ENCODE measurements at regions of chr3 and their contacts with region 1.

Region 1: DNA sequence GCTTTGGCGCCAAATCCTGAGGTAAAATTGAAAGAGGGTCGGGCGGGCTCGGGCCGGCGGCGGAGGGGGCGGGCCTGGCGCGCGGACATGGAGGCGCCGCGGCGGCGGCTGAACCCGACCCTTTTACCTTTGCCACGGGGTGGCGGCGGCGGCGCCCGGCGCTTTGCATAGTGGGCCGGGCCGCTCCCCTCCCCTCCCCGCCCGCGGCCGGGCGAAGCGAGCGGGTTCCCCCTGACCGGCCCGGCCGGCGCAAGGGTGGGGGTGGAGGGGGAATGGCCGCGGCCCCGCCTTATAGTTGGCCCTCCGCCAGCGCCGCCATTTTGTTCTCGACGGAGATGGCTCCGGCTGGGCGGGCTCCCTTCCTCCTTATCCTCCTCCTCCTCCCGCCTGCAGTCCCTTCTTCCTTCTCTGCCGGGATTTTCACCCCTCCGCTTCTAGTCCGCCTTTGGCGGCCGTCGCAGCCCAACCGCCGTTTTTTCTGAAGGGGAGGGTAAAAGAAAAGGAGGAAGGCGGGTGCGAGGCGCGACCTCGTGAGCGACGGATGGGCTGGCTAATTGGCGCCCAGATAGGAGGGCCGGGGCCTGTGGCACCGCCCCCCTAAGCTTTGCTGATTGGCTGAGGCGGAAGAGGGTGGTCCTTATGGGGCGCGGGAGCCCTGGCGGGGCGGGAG is 638 bp downstream of the NR2C2 start:
- DNase-seq: peak; percentile 95
- H3K4me3 Mint-ChIP-seq: peak overlapping the region; percentile 97
- H3K27ac Mint-ChIP-seq: peak overlapping the region; percentile 100
- H3K4me1 Mint-ChIP-seq: peaks cover 36% of the 10 kb centered on the region
- H3K27me3 Mint-ChIP-seq: no peaks in the 10 kb centered on the region

Region 2: DNA sequence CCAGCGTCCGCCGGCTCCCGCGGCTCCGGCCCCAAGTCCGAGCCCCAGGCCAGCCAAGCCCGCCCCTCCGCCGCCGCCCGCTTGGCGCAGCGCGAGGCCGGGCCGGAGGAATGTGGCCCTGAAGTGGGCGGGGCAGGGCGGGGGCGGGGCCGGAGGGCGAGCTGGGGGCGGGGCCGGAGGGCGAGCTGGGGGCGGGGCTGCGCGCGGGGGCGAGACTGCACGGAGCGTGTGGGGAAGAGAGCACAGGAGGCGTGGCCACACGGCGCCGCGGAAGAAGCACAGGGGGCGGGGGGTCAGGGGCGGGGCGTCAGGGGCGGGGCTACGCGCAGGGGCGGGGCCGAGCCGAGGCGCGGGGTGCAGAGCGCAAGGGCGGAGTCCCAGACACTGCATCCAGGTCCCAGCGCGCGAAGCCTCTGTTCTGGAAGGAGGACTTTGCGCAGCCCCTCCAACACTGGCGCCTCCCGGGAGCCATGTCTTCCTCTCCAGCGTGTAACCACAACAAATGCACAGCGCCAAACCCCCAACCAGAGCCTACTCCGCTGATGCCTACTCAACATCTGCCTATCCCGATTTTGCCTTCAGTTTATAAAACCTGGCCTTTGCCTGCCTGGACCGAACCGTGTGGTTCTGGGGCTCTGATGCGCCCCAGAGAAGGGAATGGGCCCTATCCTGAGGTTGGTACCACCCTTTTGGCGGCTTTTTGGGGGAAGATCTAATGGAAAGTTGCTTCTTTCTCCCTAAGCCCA is 1980.2 kb before region 1 on chr3:
- intact Hi-C with region 1: loop called (anchors 5 kb)
- DNase-seq: peak; percentile 83
- H3K4me3 Mint-ChIP-seq: peak overlapping the region; percentile 64
- H3K27ac Mint-ChIP-seq: peak overlapping the region; percentile 4
- H3K4me1 Mint-ChIP-seq: peaks cover 51% of the 10 kb centered on the region
- H3K27me3 Mint-ChIP-seq: no peaks in the 10 kb centered on the region

Region 3: DNA sequence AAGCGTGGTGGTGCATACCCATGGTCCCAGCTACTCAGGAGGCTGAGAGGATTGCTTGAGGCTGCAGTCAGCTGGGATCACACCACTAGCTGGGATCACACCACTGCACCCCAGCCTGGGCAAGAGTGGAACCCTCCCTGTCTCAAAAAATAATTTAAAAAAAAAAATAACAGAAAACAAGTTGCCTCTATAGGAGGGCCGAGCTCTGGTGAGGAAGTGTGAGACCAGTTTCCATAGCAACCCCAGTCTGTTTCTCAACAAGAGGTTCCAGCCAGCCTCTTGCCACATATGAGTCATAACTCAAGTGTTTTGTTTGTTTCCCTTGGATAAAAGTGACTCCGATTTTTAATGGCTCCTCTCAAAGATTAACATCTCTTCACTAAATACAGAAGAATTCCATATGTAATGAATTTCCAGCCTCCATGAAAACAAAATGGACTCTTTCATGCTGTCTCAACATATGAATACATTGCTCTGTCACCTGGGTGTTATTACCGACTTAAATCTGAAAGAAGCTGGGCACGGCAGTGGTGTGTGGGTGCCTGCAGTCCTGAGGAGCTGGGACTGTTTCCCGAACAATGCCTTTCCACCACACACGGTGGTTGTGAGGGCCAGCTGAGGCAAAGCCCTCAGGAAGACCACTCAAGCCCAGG is 803.5 kb before region 1 on chr3:
- intact Hi-C with region 1: loop called (anchors 2 kb)
- DNase-seq: peak; percentile 75
- H3K4me3 Mint-ChIP-seq: peak overlapping the region; percentile 64
- H3K27ac Mint-ChIP-seq: peak overlapping the region; percentile 93
- H3K4me1 Mint-ChIP-seq: peaks cover 59% of the 10 kb centered on the region
- H3K27me3 Mint-ChIP-seq: no peaks in the 10 kb centered on the region

Region 4: GRCh38 chr3:14431892-14432834 is 515.9 kb before region 1 on chr3:
- intact Hi-C with region 1: loop called (anchors 10 kb)
- DNase-seq: peak; percentile 92
- H3K4me3 Mint-ChIP-seq: peak overlapping the region; percentile 76
- H3K27ac Mint-ChIP-seq: peak overlapping the region; percentile 97
- H3K4me1 Mint-ChIP-seq: peaks cover 85% of the 10 kb centered on the region
- H3K27me3 Mint-ChIP-seq: no peaks in the 10 kb centered on the region

Region 5: DNA sequence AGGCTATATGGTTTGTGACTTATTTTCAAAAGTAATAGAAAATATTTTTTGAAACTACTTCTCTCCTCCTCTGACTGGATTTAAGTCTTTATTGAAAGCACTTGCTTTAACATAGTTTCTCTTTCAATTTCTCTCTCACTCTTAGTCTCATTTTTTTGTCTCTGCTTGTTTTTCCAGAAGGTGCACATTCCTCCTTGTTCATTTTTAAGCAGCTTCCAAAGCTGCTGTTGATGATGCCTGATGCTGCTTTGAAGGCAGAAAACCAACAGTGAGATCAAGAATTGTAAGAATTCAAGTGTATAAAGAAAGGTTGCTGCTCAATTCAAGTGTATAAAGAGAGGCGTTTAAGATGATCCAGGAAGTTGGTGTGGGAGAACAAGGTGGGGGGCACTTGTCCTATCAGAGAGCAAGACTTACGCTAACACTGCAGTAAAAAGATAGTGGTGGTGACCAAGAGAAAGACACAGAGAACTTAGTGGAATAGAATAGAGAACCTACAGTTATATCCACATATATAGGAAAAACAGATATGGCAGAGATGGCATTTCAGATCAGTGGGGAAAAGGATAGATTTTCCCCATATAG is 11.4 kb after region 1 on chr3:
- intact Hi-C with region 1: loop called (anchors 1 kb)
- DNase-seq: no peak
- H3K4me3 Mint-ChIP-seq: peak overlapping the region; percentile 76
- H3K27ac Mint-ChIP-seq: peak overlapping the region; percentile 82
- H3K4me1 Mint-ChIP-seq: peaks cover 37% of the 10 kb centered on the region
- H3K27me3 Mint-ChIP-seq: no peaks in the 10 kb centered on the region

Region 6: GRCh38 chr3:15098503-15099363 is 150.7 kb after region 1 on chr3 and contains the start of gene RBSN:
- intact Hi-C with region 1: loop called (anchors 1 kb)
- DNase-seq: peak; percentile 95
- H3K4me3 Mint-ChIP-seq: peak within 1 kb of the TSS; percentile 92
- H3K27ac Mint-ChIP-seq: peak within 1 kb of the TSS; percentile 98
- H3K4me1 Mint-ChIP-seq: peaks cover 22% of the 10 kb centered on the region
- H3K27me3 Mint-ChIP-seq: peaks cover 2% of the 10 kb centered on the region
- total RNA-seq, gene RBSN: 11.7 and 12.5 TPM in 2 replicates

Region 7: DNA sequence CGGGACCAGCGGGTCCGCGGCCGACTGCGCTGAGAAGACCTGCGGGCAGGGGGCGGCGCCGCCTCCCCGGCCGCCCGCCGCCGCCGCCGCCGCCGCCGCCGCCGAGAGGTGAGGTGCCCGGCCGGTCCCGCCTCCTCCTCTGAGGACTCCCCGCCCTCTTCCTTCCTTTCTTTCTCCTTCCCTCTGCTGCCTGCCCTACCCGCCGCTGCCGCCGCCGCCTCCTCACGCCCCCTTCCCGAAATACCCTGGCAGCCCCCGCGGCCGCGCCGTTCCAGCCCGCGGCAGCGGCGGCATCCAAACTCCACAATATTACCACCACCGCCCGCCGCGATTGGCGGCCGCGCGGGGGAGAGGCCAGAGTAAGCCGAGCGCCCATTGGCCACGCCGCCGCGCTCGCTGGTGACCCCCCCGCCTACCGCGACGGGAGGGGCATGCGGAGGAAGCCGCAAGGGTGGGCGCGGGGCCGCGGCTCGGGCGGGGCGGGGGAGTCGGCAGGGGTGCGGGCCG is 911.5 kb after region 1 on chr3:
- intact Hi-C with region 1: loop called (anchors 5 kb)
- DNase-seq: peak; percentile 78
- H3K4me3 Mint-ChIP-seq: peak overlapping the region; percentile 92
- H3K27ac Mint-ChIP-seq: peak overlapping the region; percentile 91
- H3K4me1 Mint-ChIP-seq: peaks cover 33% of the 10 kb centered on the region
- H3K27me3 Mint-ChIP-seq: peaks cover 3% of the 10 kb centered on the region